HepG2 (cell line): ENCODE measurements at regions of chr5 and their contacts with region 1.

Region 1: DNA sequence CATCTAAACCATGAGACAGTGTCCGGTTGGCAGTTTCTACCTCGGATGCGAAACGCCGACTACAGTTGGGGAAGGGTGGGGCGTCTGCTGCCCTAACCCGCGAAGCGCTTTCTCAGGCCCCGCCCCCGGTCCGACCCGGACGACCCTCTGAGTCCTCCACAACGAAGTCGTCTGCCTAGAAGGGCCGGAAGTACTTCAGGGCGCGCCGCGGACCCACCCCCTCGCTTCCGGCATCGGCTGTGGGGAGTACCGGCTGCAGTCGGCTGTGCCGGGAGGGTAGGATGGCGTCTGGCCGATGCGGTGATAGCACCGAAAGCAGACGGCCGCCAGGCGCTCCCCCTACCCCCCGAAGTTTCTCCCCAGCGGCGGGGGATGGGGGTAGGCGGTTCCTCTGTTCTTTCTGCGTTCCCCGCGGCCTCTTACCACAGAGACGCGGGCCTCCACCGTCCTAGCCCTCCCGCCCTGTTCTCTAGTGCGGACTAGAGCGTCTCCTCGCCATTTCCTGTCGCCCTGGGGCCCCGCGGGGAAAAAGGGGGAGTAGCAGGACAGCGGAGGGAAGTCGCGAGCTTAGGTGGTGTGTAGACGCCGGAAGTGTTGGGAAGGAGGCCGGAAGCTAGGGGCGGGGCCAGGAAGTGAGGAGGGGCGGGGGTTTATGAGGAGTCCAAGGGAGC is at the start of gene TRIM41:
- DNase-seq: peak; percentile 96
- ATAC-seq: peak; percentile 77
- H3K4me3 ChIP-seq: peak within 1 kb of the TSS; percentile 79 to 90 (median 87)
- H3K27ac ChIP-seq: peak within 1 kb of the TSS; percentile 81
- H3K4me1 ChIP-seq: peaks cover 42% of the 10 kb centered on the region
- H3K27me3 ChIP-seq: no peaks in the 10 kb centered on the region; a peak in 2 of 5 replicates
- CTCF ChIP-seq: peak; percentile 20
- EP300 ChIP-seq: no peak
- POLR2A ChIP-seq: peak in 1 of 2 experiments; percentile 94; a peak in 2 of 4 replicates
- RAD21 ChIP-seq: peak; percentile 15; the same call in 1 of the 2 replicates
- total RNA-seq, gene TRIM41: 10.9 and 16.7 TPM in 2 replicates

Region 2: DNA sequence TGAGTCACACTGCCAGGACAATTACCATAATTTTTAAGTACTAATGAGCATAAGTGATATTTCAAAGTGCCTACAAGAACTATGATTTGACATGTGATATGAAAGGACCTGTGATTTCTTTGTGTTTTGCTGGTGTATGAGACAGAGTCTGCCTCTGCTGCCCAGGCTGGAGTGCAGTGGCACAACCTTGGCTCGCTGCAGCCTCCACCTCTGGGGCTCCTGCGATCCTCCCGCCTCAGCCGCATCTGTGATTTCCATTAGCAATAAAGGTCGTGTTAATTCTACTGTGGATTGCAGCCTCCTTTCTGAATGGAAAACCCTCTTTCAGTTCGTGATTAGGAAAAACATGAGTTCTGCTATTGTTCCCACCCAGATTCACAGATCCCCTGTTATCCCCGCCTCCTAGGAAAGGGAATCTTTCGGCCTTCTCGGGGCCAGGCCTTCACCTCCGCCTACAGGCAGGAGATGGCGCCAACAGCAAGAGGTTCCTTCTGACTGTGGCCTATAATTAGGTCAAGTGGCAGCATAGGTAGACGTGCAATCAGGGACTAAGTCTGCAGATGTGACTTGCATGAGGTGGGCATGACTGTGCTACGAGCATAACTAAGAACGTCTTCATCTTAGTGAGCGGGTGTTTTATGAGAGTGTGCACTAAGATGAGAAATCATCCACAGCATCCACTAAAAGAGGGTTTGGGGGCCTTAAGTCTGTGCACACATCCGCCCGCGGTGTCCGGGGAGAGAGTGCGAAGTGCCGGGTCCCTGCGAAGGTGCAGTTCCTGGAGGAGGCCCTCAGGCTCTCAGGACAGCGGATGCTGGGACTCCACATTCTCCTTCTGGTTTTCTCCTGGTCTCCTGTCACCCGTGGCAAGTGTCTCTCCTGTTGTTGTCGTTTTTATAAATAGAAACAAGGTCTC is 41.3 kb before region 1 on chr5:
- CTCF ChIA-PET with region 1: no interaction called
- POLR2A ChIA-PET with region 1: interaction called, 19 read pairs
- in situ Hi-C with region 1: loop called (anchors 5 kb)
- intact Hi-C with region 1: no loop called
- DNase-seq: peak; percentile 74
- ATAC-seq: peak; percentile 79
- H3K4me3 ChIP-seq: peak overlapping the region in 2 of 3 experiments; percentile 25 to 46; a peak in 1 of 6 replicates
- H3K27ac ChIP-seq: no peak overlapping the region
- H3K4me1 ChIP-seq: peaks cover 58% of the 10 kb centered on the region
- H3K27me3 ChIP-seq: no peaks in the 10 kb centered on the region
- CTCF ChIP-seq: peak; percentile 95
- EP300 ChIP-seq: no peak
- POLR2A ChIP-seq: no peak
- RAD21 ChIP-seq: peak; percentile 55

Region 3: GRCh38 chr5:181191529-181192394 is 31.4 kb before region 1 on chr5:
- CTCF ChIA-PET with region 1: no interaction called
- POLR2A ChIA-PET with region 1: interaction called, 26 read pairs
- in situ Hi-C with region 1: loop called (anchors 5 kb)
- intact Hi-C with region 1: loop called (anchors 1 kb)
- DNase-seq: peak; percentile 88
- ATAC-seq: peak; percentile 65
- H3K4me3 ChIP-seq: peak overlapping the region; percentile 80 to 93 (median 81)
- H3K27ac ChIP-seq: peak overlapping the region; percentile 81
- H3K4me1 ChIP-seq: peaks cover 28% of the 10 kb centered on the region
- H3K27me3 ChIP-seq: no peaks in the 10 kb centered on the region; a peak in 1 of 5 replicates
- CTCF ChIP-seq: peak; percentile 53
- EP300 ChIP-seq: 0 out of 4 replicates have a peak, but pooled peaks of 1 of the 2 experiments have one; percentile 10
- POLR2A ChIP-seq: peak in 1 of 2 experiments; percentile 51; a peak in 1 of 4 replicates
- RAD21 ChIP-seq: 0 out of 2 replicates have a peak, but pooled peaks have one; percentile 13

Region 4: GRCh38 chr5:181207214-181208107 is 15.7 kb before region 1 on chr5:
- CTCF ChIA-PET with region 1: no interaction called
- POLR2A ChIA-PET with region 1: interaction called, 20 read pairs
- in situ Hi-C with region 1: no loop called
- intact Hi-C with region 1: loop called (anchors 1 kb)
- DNase-seq: peak; percentile 82
- ATAC-seq: peak; percentile 30
- H3K4me3 ChIP-seq: peak overlapping the region; percentile 54 to 82 (median 61)
- H3K27ac ChIP-seq: peak overlapping the region; percentile 51
- H3K4me1 ChIP-seq: peaks cover 29% of the 10 kb centered on the region
- H3K27me3 ChIP-seq: peaks cover 2 to 35% of the 10 kb centered on the region in 2 experiments; a peak in 4 of 5 replicates
- CTCF ChIP-seq: no peak
- EP300 ChIP-seq: no peak
- POLR2A ChIP-seq: no peak
- RAD21 ChIP-seq: no peak

Region 5: GRCh38 chr5:181234455-181235306 is 11.5 kb after region 1 on chr5:
- CTCF ChIA-PET with region 1: no interaction called
- POLR2A ChIA-PET with region 1: interaction called, 70 read pairs
- in situ Hi-C with region 1: no loop called
- intact Hi-C with region 1: no loop called
- DNase-seq: no peak
- ATAC-seq: peak; percentile 32
- H3K4me3 ChIP-seq: no peak overlapping the region
- H3K27ac ChIP-seq: no peak overlapping the region
- H3K4me1 ChIP-seq: peaks cover 21% of the 10 kb centered on the region; the same call in 1 of the 2 replicates
- H3K27me3 ChIP-seq: no peaks in the 10 kb centered on the region
- CTCF ChIP-seq: no peak
- EP300 ChIP-seq: no peak
- POLR2A ChIP-seq: peak; percentile 50 to 71
- RAD21 ChIP-seq: no peak

Region 6: DNA sequence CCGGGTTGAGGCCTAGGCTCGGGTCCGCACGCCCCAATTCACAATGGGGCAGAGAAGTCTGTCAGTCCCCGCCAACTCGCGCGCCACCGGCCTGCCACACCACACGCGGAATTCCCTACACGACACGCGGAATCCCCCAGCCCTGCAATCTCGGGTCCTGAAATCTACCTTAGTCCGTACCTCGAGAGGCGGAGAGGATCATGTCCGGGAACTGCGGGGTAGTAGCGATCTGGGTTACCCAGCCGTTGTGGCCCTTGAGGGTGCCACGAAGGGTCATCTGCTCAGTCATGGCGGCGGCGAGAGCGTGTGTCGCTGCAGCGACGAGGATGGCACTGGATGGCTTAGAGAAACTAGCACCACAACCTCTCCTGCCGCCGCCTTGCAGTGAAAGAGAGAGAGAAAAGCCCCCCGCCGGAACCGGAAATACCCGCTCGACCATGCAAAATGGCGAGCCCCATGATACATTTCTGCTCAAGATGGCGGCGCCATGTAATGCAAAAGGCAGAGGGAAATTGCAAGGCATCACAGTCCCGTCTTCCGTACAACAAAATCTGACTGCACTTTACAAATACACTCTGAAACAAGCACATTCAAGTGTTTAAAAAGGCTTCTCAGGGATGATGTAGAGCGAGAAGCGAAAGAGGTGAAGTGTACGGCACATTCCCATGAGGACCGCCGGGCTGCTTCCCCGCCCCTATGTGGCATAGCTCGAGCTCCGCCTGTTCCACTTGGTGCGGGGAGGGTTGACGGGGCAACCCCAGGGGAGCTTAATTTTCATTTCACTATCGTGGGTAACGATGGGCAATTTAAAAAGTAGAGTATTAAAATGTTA is 20.5 kb after region 1 on chr5 and contains the start of gene RACK1:
- CTCF ChIA-PET with region 1: no interaction called
- POLR2A ChIA-PET with region 1: interaction called, 70 read pairs
- in situ Hi-C with region 1: no loop called
- intact Hi-C with region 1: loop called (anchors 1 kb)
- DNase-seq: peak; percentile 87
- ATAC-seq: peak; percentile 51
- H3K4me3 ChIP-seq: peak within 1 kb of the TSS; percentile 91 to 94 (median 92)
- H3K27ac ChIP-seq: peak within 1 kb of the TSS; percentile 98
- H3K4me1 ChIP-seq: peaks cover 39% of the 10 kb centered on the region
- H3K27me3 ChIP-seq: no peaks in the 10 kb centered on the region; a peak in 1 of 5 replicates
- CTCF ChIP-seq: peak; percentile 25
- EP300 ChIP-seq: no peak
- POLR2A ChIP-seq: peak; percentile 96
- RAD21 ChIP-seq: no peak
- total RNA-seq, gene RACK1: 2,514 and 3,226 TPM in 2 replicates

Region 7: DNA sequence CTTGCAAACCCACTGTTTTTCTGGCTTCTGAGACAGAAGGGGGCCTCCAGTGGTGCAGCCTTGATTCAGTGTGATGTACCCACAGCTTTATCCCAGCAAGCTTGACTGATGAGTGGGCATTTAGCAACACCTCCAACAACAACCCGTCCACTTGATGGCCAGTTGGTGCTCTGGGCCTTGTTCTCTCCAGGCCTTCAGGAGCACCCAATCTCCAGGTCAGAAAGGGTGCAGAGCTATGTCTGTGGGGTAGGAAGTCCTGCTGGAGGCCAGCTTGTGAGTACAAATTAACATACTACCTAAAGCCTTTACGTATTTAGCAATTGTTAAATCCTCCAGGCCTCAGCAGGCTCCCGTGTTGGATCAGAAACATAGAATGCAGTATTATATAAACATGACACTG is 47.9 kb after region 1 on chr5:
- CTCF ChIA-PET with region 1: no interaction called
- POLR2A ChIA-PET with region 1: no interaction called
- in situ Hi-C with region 1: no loop called
- intact Hi-C with region 1: no loop called
- DNase-seq: no peak
- ATAC-seq: no peak
- H3K4me3 ChIP-seq: no peak overlapping the region
- H3K27ac ChIP-seq: no peak overlapping the region
- H3K4me1 ChIP-seq: peaks cover 15% of the 10 kb centered on the region
- H3K27me3 ChIP-seq: no peaks in the 10 kb centered on the region
- CTCF ChIP-seq: no peak
- EP300 ChIP-seq: no peak
- POLR2A ChIP-seq: no peak
- RAD21 ChIP-seq: no peak